A549 (cell line): ENCODE measurements at regions of chr15 and their contacts with region 1.

Region 1: DNA sequence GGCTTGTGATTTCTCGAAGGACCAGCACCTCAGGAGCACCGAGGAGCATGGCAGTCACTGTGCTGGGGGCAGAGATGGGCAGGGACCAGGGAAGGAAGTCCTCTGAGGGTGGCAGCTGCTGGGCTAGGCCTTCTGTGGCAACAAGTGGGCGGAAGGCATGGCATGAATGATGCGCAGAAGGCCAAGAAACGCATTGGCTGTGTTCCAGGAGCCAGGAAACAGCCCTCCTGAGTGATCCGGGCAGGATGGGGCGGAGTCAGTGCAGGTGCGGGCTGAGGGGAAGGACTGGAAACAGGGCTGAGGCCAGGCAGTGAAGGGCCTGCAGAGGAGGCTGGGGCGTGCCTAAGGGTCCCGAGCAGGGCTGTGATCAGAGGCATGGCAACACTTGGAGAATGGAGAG is 23.6 kb downstream of the MRPS11 start:
- DNase-seq: no peak
- ATAC-seq: no peak
- H3K4me3 ChIP-seq: no peak overlapping the region
- H3K27ac ChIP-seq: no peak overlapping the region
- H3K4me1 ChIP-seq: no peaks in the 10 kb centered on the region
- CTCF ChIP-seq: no peak
- EP300 ChIP-seq: no peak
- POLR2A ChIP-seq: no peak
- RAD21 ChIP-seq: no peak

Region 2: GRCh38 chr15:88476635-88477060 is 14.5 kb before region 1 on chr15:
- CTCF ChIA-PET with region 1: interaction called, 13 read pairs
- POLR2A ChIA-PET with region 1: no interaction called
- DNase-seq: peak; percentile 48 to 68
- ATAC-seq: peak; percentile 24 to 75; a peak in 4 of 6 replicates
- H3K4me3 ChIP-seq: no peak overlapping the region
- H3K27ac ChIP-seq: no peak overlapping the region
- H3K4me1 ChIP-seq: no peaks in the 10 kb centered on the region
- CTCF ChIP-seq: peak; percentile 78
- EP300 ChIP-seq: no peak
- POLR2A ChIP-seq: no peak
- RAD21 ChIP-seq: peak; percentile 84 to 85

Region 3: GRCh38 chr15:88638626-88639372 is 147.6 kb after region 1 on chr15 and contains the start of gene ISG20:
- CTCF ChIA-PET with region 1: no interaction called
- POLR2A ChIA-PET with region 1: interaction called, 12 read pairs
- DNase-seq: peak; percentile 98 to 100
- ATAC-seq: peak; percentile 80 to 92
- H3K4me3 ChIP-seq: peak within 1 kb of the TSS; percentile 31
- H3K27ac ChIP-seq: peak within 1 kb of the TSS; percentile 87 to 92
- H3K4me1 ChIP-seq: peaks cover 55% of the 10 kb centered on the region
- CTCF ChIP-seq: peak; percentile 44
- EP300 ChIP-seq: peak; percentile 61 to 83; a peak in 3 of 5 replicates
- POLR2A ChIP-seq: no peak
- RAD21 ChIP-seq: peak; percentile 10 to 51; a peak in 4 of 5 replicates
- polyA plus RNA-seq, gene ISG20: 47.4 and 65.8 TPM in 2 replicates